PC-3 (cell line): ENCODE measurements at regions of chr3 and their contacts with region 1.

Region 1: DNA sequence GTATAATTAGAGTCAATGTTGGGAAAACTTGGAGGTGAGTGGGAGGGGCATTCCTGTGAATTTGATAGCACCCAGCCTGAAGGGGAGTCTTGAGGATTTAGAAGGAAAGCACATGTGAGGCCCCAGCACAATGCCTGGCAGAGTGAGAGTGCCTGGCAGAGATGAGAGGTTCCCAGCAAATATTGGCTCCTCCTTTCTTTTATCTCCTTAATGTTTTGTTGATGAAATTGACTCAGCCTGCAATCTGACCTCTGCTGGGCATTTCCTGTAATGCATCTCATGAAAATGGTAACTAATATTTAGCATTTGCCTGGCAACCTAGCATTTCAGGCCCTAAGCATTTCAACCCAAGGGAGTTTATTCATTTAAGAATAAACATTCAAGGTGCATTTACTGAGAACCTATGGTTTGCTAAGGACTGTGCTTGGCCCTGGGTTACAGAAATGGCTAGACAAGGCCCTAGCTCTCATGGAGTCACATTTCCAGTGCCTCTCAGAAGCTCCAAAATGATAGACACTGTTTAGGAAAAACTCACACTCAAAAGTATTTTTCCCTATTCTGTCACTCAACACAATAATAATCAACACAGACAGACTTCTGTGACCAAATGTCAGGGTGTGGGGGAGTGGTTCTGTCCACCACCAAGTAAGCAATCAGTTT is 19.0 kb downstream of the PDHB start:
- DNase-seq: peak; percentile 85
- ATAC-seq: peak; percentile 71
- H3K4me3 ChIP-seq: no peak overlapping the region
- H3K27ac ChIP-seq: peak overlapping the region; percentile 48
- H3K4me1 ChIP-seq: peaks cover 6% of the 10 kb centered on the region
- H3K27me3 ChIP-seq: no peaks in the 10 kb centered on the region
- CTCF ChIP-seq: peak; percentile 85

Region 2: DNA sequence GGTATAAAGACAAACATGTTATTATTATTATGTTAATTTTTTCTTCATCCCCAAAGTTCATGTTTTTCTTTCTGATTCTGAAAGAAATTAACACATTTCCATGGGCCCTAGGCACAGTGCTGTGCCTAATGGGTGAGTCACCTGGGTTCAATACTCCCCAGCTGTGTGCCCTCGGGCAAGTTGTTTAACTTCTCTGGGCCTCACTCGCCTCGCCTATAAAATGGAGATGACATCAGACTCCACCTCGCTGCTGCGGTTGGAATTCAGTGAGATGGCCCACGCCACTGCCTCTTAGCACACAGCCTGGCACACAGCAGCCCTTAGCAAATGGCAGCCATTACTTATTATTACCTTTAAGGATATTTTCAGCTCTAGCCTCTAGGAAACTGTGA is 226.5 kb before region 1 on chr3:
- CTCF ChIA-PET with region 1: no interaction called
- POLR2A ChIA-PET with region 1: no interaction called
- intact Hi-C with region 1: loop called (anchors 10 kb)
- DNase-seq: peak; percentile 84
- ATAC-seq: peak; percentile 72
- H3K4me3 ChIP-seq: no peak overlapping the region
- H3K27ac ChIP-seq: peak overlapping the region; percentile 77
- H3K4me1 ChIP-seq: peaks cover 23% of the 10 kb centered on the region
- H3K27me3 ChIP-seq: no peaks in the 10 kb centered on the region
- CTCF ChIP-seq: no peak

Region 3: GRCh38 chr3:58305882-58306711 is 108.6 kb before region 1 on chr3 and contains the starts of genes HTD2 and RPP14:
- CTCF ChIA-PET with region 1: interaction called, 5 read pairs
- POLR2A ChIA-PET with region 1: no interaction called
- intact Hi-C with region 1: loop called (anchors 2 kb)
- DNase-seq: peak; percentile 99
- ATAC-seq: peak; percentile 92
- H3K4me3 ChIP-seq: peak within 1 kb of the TSS; percentile 95
- H3K27ac ChIP-seq: peak within 1 kb of the TSS; percentile 75
- H3K4me1 ChIP-seq: peaks cover 11% of the 10 kb centered on the region
- H3K27me3 ChIP-seq: no peaks in the 10 kb centered on the region
- CTCF ChIP-seq: peak; percentile 90
- total RNA-seq, gene HTD2: 4.9 and 6.9 TPM in 2 replicates
- total RNA-seq, gene RPP14: 28.8 and 30.0 TPM in 2 replicates

Region 4: DNA sequence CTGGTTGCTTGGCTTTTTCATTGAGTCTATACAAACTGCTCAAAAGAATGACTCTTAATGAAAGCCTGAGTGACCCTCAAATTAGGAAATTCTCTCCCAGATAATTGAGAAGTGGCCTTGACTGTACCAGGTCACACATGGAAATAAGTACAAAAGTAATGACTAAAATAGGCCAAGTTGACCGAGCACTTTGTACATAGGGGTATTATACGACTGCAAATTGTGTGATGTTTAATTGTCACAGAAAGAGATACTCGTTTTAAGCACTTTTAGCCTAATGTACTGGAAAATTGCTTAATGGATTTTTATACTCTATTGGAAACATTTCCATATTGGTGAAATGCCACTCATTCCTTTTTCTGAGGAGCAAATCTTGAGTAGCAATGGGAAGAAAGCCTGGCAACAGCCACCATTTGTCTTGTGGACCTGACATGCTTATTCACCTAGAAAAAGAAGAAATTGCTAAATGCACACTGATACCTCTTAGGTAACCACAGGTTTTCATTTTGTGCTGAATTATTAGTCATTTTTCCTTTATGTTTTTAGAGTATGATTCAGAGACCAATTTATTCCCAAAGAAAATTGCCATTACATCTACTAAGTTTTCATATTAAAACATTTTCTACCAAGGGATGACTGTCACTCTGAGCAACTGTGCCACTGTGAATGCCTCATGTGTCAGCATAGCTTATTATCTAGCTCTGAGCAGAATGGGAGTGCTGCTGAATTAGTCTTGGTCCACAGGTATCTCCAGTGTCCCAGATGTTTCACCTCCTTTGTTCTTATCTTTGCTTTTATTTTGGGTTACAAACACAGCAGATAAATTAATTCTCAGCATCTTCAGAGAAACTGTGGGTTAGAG is 90.9 kb before region 1 on chr3:
- CTCF ChIA-PET with region 1: no interaction called
- POLR2A ChIA-PET with region 1: interaction called, 22 read pairs
- intact Hi-C with region 1: loop called (anchors 1 kb)
- DNase-seq: peak; percentile 13
- ATAC-seq: peak; percentile 36
- H3K4me3 ChIP-seq: no peak overlapping the region
- H3K27ac ChIP-seq: no peak overlapping the region
- H3K4me1 ChIP-seq: no peaks in the 10 kb centered on the region
- H3K27me3 ChIP-seq: no peaks in the 10 kb centered on the region
- CTCF ChIP-seq: no peak

Region 5: DNA sequence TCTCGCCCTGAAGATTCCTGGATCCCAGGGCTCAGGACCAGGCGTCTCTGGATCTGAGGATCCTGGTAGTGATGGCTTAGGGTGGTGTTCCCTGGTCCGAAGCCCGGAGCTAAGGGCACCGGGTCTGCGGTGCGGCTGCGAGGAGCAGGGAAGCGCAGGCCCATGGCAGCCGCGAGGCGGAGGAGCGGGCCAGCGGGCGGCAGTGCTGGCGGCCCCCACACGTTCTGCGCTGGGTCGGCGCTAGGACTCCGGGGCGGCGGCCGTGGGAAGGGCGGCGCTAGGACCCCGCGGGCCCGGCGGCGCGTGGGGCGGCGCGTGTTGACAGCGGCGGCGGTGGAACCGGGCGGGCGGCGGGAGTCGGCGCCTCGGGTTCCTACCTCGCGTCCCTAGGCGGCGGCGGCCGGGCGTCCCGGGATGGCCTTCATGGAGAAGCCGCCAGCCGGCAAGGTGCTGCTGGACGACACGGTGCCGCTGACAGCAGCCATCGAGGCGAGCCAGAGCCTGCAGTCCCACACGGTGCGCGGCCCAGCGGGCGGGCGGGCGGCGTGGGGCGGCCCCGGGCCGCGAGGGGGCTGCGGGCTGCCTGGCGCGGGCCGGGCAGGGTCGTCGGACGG is 82.0 kb before region 1 on chr3 and contains the start of gene PXK:
- CTCF ChIA-PET with region 1: interaction called, 4 read pairs
- POLR2A ChIA-PET with region 1: no interaction called
- intact Hi-C with region 1: loop called (anchors 1 kb)
- DNase-seq: peak; percentile 74
- ATAC-seq: peak; percentile 78
- H3K4me3 ChIP-seq: peak within 1 kb of the TSS; percentile 95
- H3K27ac ChIP-seq: peak within 1 kb of the TSS; percentile 91
- H3K4me1 ChIP-seq: peaks cover 36% of the 10 kb centered on the region
- H3K27me3 ChIP-seq: no peaks in the 10 kb centered on the region
- CTCF ChIP-seq: peak; percentile 26; the same call in 1 of the 2 replicates
- total RNA-seq, gene PXK: 11.1 and 14.5 TPM in 2 replicates

Region 6: GRCh38 chr3:58383904-58384303 is 30.8 kb before region 1 on chr3:
- CTCF ChIA-PET with region 1: no interaction called
- POLR2A ChIA-PET with region 1: no interaction called
- intact Hi-C with region 1: loop called (anchors 1 kb)
- DNase-seq: peak; percentile 99
- ATAC-seq: peak; percentile 89
- H3K4me3 ChIP-seq: no peak overlapping the region
- H3K27ac ChIP-seq: peak overlapping the region; percentile 92
- H3K4me1 ChIP-seq: peaks cover 42% of the 10 kb centered on the region
- H3K27me3 ChIP-seq: no peaks in the 10 kb centered on the region
- CTCF ChIP-seq: no peak